CD14-positive monocyte (primary cell): ENCODE measurements at regions of chr16 and their contacts with region 1.

Region 1: GRCh38 chr16:53054670-53055485 is at the start of gene CHD9:
- DNase-seq: peak; percentile 77 to 85 (median 79)
- H3K4me3 ChIP-seq: peak within 1 kb of the TSS; percentile 78 to 96 (median 93)
- H3K4me3 Mint-ChIP-seq: peak within 1 kb of the TSS; percentile 83 to 95
- H3K27ac ChIP-seq: peak within 1 kb of the TSS; percentile 35 to 81
- H3K27ac Mint-ChIP-seq: peak within 1 kb of the TSS; percentile 15 to 89 (median 80)
- H3K4me1 ChIP-seq: peaks cover 29 to 37% of the 10 kb centered on the region in 2 donors
- H3K4me1 Mint-ChIP-seq: peaks cover 43% of the 10 kb centered on the region
- H3K27me3 ChIP-seq: no peaks in the 10 kb centered on the region
- H3K27me3 Mint-ChIP-seq: peaks cover 0 to 6% (median 5%) of the 10 kb centered on the region in 3 donors
- CTCF ChIP-seq: peak; percentile 98
- polyA plus RNA-seq, gene CHD9: 15.8 to 26.1 (median 22.5) TPM

Region 2: DNA sequence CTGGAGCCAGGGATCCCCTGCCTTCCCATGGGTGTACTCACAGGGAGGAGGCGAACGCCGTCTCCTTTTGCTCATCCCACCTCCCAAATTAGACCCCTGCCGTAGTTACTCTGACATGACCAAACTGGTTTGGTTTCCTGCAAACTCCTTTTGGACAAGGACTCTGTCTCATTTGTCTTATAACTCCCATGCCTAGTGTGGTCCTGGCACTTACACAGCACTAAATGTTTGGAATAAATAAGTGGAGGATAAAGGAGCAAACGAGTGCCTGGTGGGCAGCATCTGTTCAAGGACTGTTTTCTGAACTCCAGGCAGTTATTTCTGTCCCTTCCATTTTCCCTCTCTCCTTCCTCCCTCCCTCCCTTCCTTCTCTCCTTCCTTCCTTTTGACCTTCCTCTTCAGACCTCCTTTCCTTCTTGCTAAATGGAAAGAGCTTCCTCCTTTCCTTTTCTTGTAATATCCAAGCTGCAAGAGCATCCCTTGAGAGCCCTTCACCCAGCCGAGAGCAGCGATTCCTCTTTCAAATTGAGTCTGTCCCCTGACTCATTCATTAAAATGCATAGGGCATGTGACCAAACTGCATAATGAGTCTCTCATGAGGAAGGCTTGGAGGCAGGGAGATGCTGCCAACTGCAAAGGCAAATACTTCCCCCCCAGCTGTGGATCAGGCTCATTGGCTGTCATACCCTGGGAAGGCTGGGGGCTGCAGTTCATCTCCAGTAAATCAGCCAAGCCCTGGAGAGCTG is 36.8 kb after region 1 on chr16:
- intact Hi-C with region 1: loop called in 1 of 2 experiments (anchors 5 kb)
- DNase-seq: peak; percentile 86 to 94 (median 91)
- H3K4me3 ChIP-seq: peak overlapping the region; percentile 8 to 69 (median 15)
- H3K4me3 Mint-ChIP-seq: peak overlapping the region; percentile 66 to 84
- H3K27ac ChIP-seq: peak overlapping the region; percentile 80 to 89
- H3K27ac Mint-ChIP-seq: peak overlapping the region; percentile 90 to 98 (median 95)
- H3K4me1 ChIP-seq: peaks cover 50 to 58% of the 10 kb centered on the region in 2 donors
- H3K4me1 Mint-ChIP-seq: peaks cover 59% of the 10 kb centered on the region
- H3K27me3 ChIP-seq: no peaks in the 10 kb centered on the region
- H3K27me3 Mint-ChIP-seq: peaks cover 0 to 8% (median 3%) of the 10 kb centered on the region in 3 donors
- CTCF ChIP-seq: no peak

Region 3: GRCh38 chr16:53159781-53160436 is 105.0 kb after region 1 on chr16:
- intact Hi-C with region 1: loop called in 1 of 2 experiments (anchors 5 kb)
- DNase-seq: peak; percentile 39 to 59 (median 54)
- H3K4me3 ChIP-seq: no peak overlapping the region
- H3K4me3 Mint-ChIP-seq: no peak overlapping the region
- H3K27ac ChIP-seq: no peak overlapping the region
- H3K27ac Mint-ChIP-seq: peak overlapping the region in 3 of 7 donors; percentile 8 to 54 (median 32)
- H3K4me1 ChIP-seq: no peaks in the 10 kb centered on the region
- H3K4me1 Mint-ChIP-seq: no peaks in the 10 kb centered on the region
- H3K27me3 ChIP-seq: no peaks in the 10 kb centered on the region
- H3K27me3 Mint-ChIP-seq: no peaks in the 10 kb centered on the region
- CTCF ChIP-seq: peak; percentile 84

Region 4: GRCh38 chr16:53220585-53220984 is 165.7 kb after region 1 on chr16:
- intact Hi-C with region 1: loop called in 1 of 2 experiments (anchors 5 kb)
- DNase-seq: peak in 2 of 3 donors; percentile 26 to 42
- H3K4me3 ChIP-seq: peak overlapping the region in 1 of 3 experiments; percentile 41
- H3K4me3 Mint-ChIP-seq: no peak overlapping the region
- H3K27ac ChIP-seq: peak overlapping the region; percentile 23 to 83
- H3K27ac Mint-ChIP-seq: no peak overlapping the region
- H3K4me1 ChIP-seq: peaks cover 39 to 59% of the 10 kb centered on the region in 2 donors
- H3K4me1 Mint-ChIP-seq: peaks cover 13% of the 10 kb centered on the region
- H3K27me3 ChIP-seq: no peaks in the 10 kb centered on the region
- H3K27me3 Mint-ChIP-seq: no peaks in the 10 kb centered on the region
- CTCF ChIP-seq: peak; percentile 58

Region 5: GRCh38 chr16:53583401-53583800 is 528.5 kb after region 1 on chr16:
- intact Hi-C with region 1: no loop called
- DNase-seq: no peak
- H3K4me3 ChIP-seq: no peak overlapping the region
- H3K4me3 Mint-ChIP-seq: no peak overlapping the region
- H3K27ac ChIP-seq: no peak overlapping the region
- H3K27ac Mint-ChIP-seq: no peak overlapping the region
- H3K4me1 ChIP-seq: no peaks in the 10 kb centered on the region
- H3K4me1 Mint-ChIP-seq: peaks cover 8% of the 10 kb centered on the region
- H3K27me3 ChIP-seq: no peaks in the 10 kb centered on the region
- H3K27me3 Mint-ChIP-seq: peaks cover 1 to 3% (median 2%) of the 10 kb centered on the region in 3 donors
- CTCF ChIP-seq: no peak